ENCODE measurements at regions of chr3 and their contacts with region 1.

Region 1: GRCh38 chr3:186570096-186570940 is at the start of gene DNAJB11:
- DNase-seq: peak; percentile 95
- ATAC-seq: peak; percentile 89
- H3K4me3 Mint-ChIP-seq: peak within 1 kb of the TSS; percentile 96
- H3K27ac Mint-ChIP-seq: peak within 1 kb of the TSS; percentile 99
- H3K4me1 Mint-ChIP-seq: peaks cover 32% of the 10 kb centered on the region
- H3K27me3 Mint-ChIP-seq: no peaks in the 10 kb centered on the region
- total RNA-seq, gene DNAJB11: 37.0 to 41.2 TPM

Region 2: GRCh38 chr3:186617038-186617946 is 47.0 kb after region 1 on chr3:
- POLR2A ChIA-PET with region 1: interaction called, 11 read pairs
- DNase-seq: peak; percentile 83
- ATAC-seq: peak; percentile 100
- H3K4me3 Mint-ChIP-seq: peak overlapping the region; percentile 66
- H3K27ac Mint-ChIP-seq: peak overlapping the region; percentile 22
- H3K4me1 Mint-ChIP-seq: peaks cover 18% of the 10 kb centered on the region
- H3K27me3 Mint-ChIP-seq: peaks cover 23% of the 10 kb centered on the region